Panc1 (cell line): ENCODE measurements at regions of chr14 and their contacts with region 1.

Region 1: GRCh38 chr14:105689728-105690127 is 163.3 kb downstream of the TMEM121 start:
- DNase-seq: no peak
- ATAC-seq: no peak
- H3K4me3 ChIP-seq: no peak overlapping the region
- H3K27ac ChIP-seq: no peak overlapping the region
- H3K4me1 ChIP-seq: no peaks in the 10 kb centered on the region
- H3K27me3 ChIP-seq: no peaks in the 10 kb centered on the region
- CTCF ChIP-seq: no peak

Region 2: DNA sequence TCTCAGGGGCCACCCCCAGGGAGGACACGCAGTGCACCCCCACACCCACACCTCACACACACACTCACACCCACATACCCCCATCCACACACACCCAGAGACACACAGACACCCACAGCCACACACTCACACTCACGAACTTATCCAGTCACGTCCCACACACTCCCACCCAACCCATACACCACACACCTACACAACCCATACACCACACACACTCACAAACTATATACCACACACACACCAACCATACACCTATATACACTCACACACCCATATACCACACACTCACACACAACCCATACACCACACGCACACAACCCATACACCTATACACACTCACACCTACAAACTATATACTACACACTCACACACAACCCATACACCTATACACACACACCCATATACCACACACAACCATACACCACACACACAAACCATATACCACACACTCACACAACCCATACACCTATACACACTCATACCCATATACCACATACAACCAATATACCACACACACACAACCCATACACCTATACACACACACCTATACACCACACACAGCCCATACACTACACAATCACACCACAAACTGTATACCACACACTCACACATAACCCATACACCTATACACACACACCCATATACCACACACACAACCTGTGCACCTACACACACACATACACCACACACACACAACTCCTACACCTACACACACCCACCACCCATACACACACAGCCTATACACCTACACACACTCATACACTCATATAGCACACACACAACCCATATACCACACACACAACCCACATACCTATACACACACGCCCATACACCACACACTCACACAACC is 120.6 kb before region 1 on chr14:
- CTCF ChIA-PET with region 1: no interaction called
- POLR2A ChIA-PET with region 1: no interaction called
- in situ Hi-C with region 1: no loop called
- intact Hi-C with region 1: loop called (anchors 5 kb)
- DNase-seq: no peak
- ATAC-seq: no peak
- H3K4me3 ChIP-seq: no peak overlapping the region
- H3K27ac ChIP-seq: no peak overlapping the region
- H3K4me1 ChIP-seq: no peaks in the 10 kb centered on the region
- H3K27me3 ChIP-seq: no peaks in the 10 kb centered on the region
- CTCF ChIP-seq: no peak

Region 3: GRCh38 chr14:106487600-106487999 is 797.9 kb after region 1 on chr14:
- CTCF ChIA-PET with region 1: no interaction called
- POLR2A ChIA-PET with region 1: no interaction called
- in situ Hi-C with region 1: no loop called
- intact Hi-C with region 1: no loop called
- DNase-seq: no peak
- ATAC-seq: no peak
- H3K4me3 ChIP-seq: no peak overlapping the region
- H3K27ac ChIP-seq: no peak overlapping the region
- H3K4me1 ChIP-seq: no peaks in the 10 kb centered on the region
- H3K27me3 ChIP-seq: no peaks in the 10 kb centered on the region
- CTCF ChIP-seq: no peak